HEK293 (cell line): ENCODE measurements at regions of chr5 and their contacts with region 1.

Region 1: GRCh38 chr5:115098041-115098702 is 71.5 kb downstream of the TRIM36 start:
- H3K4me3 ChIP-seq: no peak overlapping the region
- H3K27ac ChIP-seq: no peak overlapping the region
- H3K4me1 ChIP-seq: peaks cover 6% of the 10 kb centered on the region; the same call in 1 of the 2 replicates
- CTCF ChIP-seq: peak; percentile 23; the same call in 1 of the 2 replicates

Region 2: GRCh38 chr5:115033861-115034260 is 64.3 kb before region 1 on chr5:
- CTCF ChIA-PET with region 1: no interaction called
- POLR2A ChIA-PET with region 1: no interaction called
- H3K4me3 ChIP-seq: no peak overlapping the region
- H3K27ac ChIP-seq: no peak overlapping the region
- H3K4me1 ChIP-seq: no peaks in the 10 kb centered on the region
- CTCF ChIP-seq: no peak

Region 3: GRCh38 chr5:115246361-115246991 is 148.3 kb after region 1 on chr5:
- CTCF ChIA-PET with region 1: interaction called, 74 read pairs
- POLR2A ChIA-PET with region 1: no interaction called
- H3K4me3 ChIP-seq: no peak overlapping the region
- H3K27ac ChIP-seq: no peak overlapping the region
- H3K4me1 ChIP-seq: no peaks in the 10 kb centered on the region
- CTCF ChIP-seq: peak; percentile 46; the same call in 1 of the 2 replicates